ENCODE measurements at regions of chr1 and their contacts with region 1.

Region 1: DNA sequence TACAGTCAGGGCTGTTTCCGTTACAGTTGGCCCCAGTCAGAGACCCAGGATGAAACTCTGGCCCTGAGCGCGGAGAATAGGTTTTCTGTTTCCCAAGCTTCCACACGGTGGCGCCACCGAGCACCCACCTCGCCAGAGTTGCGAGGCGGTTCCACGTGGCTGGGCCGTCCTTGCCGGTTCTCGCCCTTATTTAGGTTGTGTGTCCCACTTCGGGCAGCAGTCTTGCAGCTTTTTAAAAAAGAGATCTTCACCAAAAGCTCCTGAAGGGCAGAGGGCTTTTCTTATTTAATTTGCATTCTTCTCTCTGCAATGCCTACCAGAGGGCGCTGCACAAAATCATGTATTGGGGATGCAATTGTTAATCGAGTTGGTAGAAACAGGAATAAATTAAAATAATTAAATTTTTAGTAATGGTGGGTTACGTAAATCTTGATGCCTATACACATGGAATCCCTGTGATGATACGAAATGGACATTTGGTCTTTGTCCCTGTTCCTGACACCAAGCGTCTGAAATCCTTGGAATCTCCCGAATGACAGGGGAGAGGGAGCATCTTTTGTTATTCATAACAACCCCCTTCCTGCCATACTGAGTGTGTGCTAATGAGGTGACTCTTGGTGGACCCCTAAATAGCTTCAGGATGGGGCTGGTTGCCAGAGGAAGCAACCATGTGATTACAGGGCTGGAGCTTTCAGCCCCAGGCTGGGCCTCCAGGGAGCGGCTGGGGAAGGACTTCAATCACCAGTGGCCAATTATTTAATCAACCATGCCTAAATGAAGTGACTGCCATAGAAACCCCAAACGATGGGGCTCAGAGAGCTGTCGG is 5.6 kb upstream of the S100A7 start:
- DNase-seq: peak; percentile 65
- ATAC-seq: peak; percentile 88
- H3K4me3 ChIP-seq: no peak overlapping the region
- H3K27ac ChIP-seq: no peak overlapping the region
- H3K4me1 ChIP-seq: no peaks in the 10 kb centered on the region
- H3K27me3 ChIP-seq: 0 out of 2 replicates have a peak, but pooled peaks cover 6% of the 10 kb centered on the region
- CTCF ChIP-seq: peak; percentile 89

Region 2: DNA sequence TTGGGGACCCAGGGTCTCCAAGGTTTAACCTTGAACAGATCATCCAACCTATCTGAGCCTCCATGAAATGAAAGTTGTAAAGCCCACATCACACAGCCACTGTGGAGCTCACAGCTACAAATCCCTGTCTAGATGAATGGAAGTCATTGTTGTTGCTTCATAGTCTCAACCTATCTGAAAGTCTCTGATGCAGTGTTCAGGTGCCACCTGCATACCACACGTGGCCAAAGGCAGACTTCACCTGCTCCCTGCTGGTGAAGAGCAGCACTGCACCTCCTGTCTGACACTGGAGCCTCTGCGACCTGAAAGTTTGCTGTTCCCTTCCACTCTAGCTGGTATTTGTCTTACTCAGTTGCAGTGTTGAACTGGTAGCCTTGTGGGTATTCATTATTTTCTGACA is 188.2 kb before region 1 on chr1:
- CTCF ChIA-PET with region 1: no interaction called
- POLR2A ChIA-PET with region 1: no interaction called
- intact Hi-C with region 1: no loop called
- DNase-seq: peak; percentile 75
- ATAC-seq: peak; percentile 69
- H3K4me3 ChIP-seq: no peak overlapping the region
- H3K27ac ChIP-seq: no peak overlapping the region
- H3K4me1 ChIP-seq: no peaks in the 10 kb centered on the region
- H3K27me3 ChIP-seq: peaks cover 69% of the 10 kb centered on the region
- CTCF ChIP-seq: peak; percentile 92

Region 3: DNA sequence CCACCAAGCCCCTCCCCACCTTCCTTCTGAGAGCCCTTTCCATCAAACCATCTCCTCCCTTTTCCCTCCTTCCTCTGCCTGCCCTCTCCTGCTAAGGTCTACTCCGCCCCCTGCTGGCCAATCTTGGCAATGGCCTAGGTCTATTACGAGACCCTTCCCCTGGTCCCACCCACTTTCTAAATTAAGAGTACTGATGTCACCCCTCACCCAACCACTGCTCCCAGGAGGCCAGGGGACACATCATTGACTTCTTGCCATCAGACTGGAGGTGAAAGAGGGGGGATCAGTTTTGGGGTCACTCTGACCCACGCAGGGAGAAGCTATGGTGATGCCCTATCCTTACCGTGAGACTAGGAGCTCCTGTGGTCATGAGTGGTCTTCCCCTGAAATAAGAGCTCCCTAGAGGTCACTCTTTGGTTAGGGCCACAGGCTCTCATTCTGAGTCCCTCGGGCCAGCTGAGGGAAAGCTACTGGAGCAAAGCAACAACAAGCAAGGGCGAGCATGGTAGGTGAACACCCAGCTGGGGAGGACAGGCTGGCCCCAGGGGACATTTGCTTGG is 29.0 kb after region 1 on chr1:
- CTCF ChIA-PET with region 1: no interaction called
- POLR2A ChIA-PET with region 1: no interaction called
- intact Hi-C with region 1: loop called (anchors 1 kb)
- DNase-seq: peak; percentile 88
- ATAC-seq: peak; percentile 43
- H3K4me3 ChIP-seq: no peak overlapping the region
- H3K27ac ChIP-seq: no peak overlapping the region
- H3K4me1 ChIP-seq: peaks cover 18% of the 10 kb centered on the region
- H3K27me3 ChIP-seq: no peaks in the 10 kb centered on the region
- CTCF ChIP-seq: peak; percentile 98

Measured in PC-3 (cell line).